Psoas muscle (tissue), 8 donors: ENCODE measurements at regions of chr1 and their contacts with region 1.

Region 1: GRCh38 chr1:43227143-43227764 is 42.5 kb upstream of the TMEM125 start:
- DNase-seq: peak; percentile 79 to 88
- ATAC-seq: peak; percentile 83 to 95 (median 88)
- H3K4me3 ChIP-seq: no peak overlapping the region
- H3K27ac ChIP-seq: no peak overlapping the region
- H3K4me1 ChIP-seq: no peaks in the 10 kb centered on the region
- H3K27me3 ChIP-seq: no peaks in the 10 kb centered on the region
- CTCF ChIP-seq: peak; percentile 96

Region 2: DNA sequence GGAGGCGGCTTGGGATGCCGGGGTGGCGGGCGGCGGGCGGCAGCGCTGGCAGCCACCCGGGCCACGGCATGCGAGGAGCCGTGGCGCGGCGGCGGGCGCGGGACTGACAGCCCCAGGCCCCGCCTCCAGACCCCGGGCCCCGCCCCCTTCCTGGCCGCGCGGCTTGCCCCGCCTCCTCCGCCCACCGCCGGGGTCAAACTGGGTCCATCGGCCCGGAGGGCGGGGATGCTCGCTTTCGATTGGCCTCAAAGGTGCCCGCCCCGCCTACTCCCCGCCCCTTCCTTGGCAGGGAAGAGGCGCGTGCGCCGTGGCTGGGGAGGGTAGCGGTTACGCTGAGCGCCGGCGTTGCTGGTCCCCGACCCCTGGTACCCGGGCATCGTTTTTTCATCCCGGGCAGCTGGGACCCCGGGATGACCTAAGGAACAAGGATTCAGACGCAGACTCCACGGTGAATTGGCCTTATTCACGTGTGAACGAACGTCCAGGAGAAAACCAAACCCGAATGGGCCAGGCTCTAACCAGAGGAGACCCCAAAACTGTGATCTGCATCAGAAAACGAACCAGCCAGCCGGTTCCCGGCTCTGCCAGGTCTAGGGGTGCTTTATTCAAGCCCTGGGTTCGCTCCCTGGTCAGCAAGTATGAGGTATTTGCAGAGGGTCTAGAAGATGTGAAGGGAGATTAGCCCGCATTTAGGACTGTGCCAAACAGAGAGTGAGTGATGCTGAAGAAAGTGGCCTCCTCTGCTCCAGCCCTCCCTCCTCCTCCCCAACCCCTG is 1191.2 kb before region 1 on chr1:
- intact Hi-C with region 1: no loop called
- DNase-seq: peak; percentile 97 to 98
- ATAC-seq: peak; percentile 98 to 99 (median 98)
- H3K4me3 ChIP-seq: peak overlapping the region; percentile 96
- H3K27ac ChIP-seq: peak overlapping the region; percentile 76
- H3K4me1 ChIP-seq: peaks cover 8% of the 10 kb centered on the region
- H3K27me3 ChIP-seq: no peaks in the 10 kb centered on the region
- CTCF ChIP-seq: no peak

Region 3: GRCh38 chr1:43367904-43368645 is 140.8 kb after region 1 on chr1 and contains the start of gene ELOVL1:
- intact Hi-C with region 1: loop called in 1 of 2 experiments (anchors 5 kb)
- DNase-seq: peak; percentile 94 to 96
- ATAC-seq: peak; percentile 95 to 97 (median 95)
- H3K4me3 ChIP-seq: peak within 1 kb of the TSS; percentile 81
- H3K27ac ChIP-seq: peak within 1 kb of the TSS; percentile 94
- H3K4me1 ChIP-seq: peaks cover 14% of the 10 kb centered on the region
- H3K27me3 ChIP-seq: no peaks in the 10 kb centered on the region
- CTCF ChIP-seq: peak; percentile 19
- total RNA-seq, gene ELOVL1: 15.9 to 19.2 (median 17.6) TPM

Region 4: GRCh38 chr1:43383449-43383848 is 156.2 kb after region 1 on chr1:
- intact Hi-C with region 1: loop called (anchors 5 to 10 kb)
- DNase-seq: no peak
- ATAC-seq: peak; percentile 68 to 83 (median 78)
- H3K4me3 ChIP-seq: no peak overlapping the region
- H3K27ac ChIP-seq: no peak overlapping the region
- H3K4me1 ChIP-seq: peaks cover 11% of the 10 kb centered on the region
- H3K27me3 ChIP-seq: no peaks in the 10 kb centered on the region
- CTCF ChIP-seq: peak; percentile 29

Region 5: DNA sequence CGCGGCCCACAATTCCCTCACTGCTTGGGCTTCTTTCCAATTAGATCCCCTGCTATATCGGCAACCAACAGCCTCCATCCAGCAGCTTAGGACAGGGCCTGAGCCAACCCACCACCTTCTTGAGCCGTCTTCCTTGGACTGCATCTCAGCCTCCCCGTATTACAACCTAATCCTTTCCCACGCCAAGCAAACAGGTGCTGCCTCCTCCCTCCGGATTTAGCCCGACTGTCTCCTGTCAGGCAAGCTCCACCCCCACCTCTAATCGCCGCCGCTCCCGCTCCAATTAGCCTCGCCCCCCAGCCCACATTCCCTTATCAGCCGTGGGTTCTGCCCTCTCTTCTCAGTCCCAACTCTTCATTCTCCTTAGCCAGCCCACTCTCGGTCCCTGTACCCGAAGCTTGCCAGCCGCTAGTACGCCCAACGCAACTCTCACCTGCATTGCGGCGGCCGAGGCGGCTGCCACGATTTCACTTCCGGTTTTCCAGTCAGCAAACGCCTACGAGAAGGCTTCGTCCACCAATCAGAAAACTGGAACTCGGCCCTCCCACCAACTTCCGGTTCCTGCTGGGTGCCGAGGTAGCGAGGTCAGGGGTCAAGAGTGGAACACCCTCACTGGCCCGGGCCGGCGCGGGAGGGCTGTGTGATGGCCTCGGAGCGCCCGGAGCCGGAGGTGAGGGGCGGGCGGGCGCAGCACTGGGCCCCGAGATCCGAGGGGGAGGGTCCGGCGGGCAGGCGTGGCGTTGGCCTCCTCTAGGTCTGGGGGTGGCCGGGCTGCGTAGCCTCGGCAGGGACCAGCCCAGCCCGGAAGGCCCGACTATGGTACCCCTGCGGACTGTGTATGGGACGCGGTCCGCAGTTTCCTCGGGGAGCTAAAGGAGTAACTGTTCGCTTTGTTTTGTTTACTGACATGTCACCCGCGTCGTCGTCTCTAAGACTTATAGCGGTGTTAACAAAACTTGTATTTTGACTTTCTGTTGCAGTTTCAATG is 162.4 kb after region 1 on chr1 and contains the starts of genes MED8 and SZT2:
- intact Hi-C with region 1: loop called (anchors 5 to 10 kb)
- DNase-seq: peak; percentile 95 to 97
- ATAC-seq: peak; percentile 99 to 100 (median 100)
- H3K4me3 ChIP-seq: peak within 1 kb of the TSS; percentile 91
- H3K27ac ChIP-seq: peak within 1 kb of the TSS; percentile 90
- H3K4me1 ChIP-seq: peaks cover 29% of the 10 kb centered on the region
- H3K27me3 ChIP-seq: no peaks in the 10 kb centered on the region
- CTCF ChIP-seq: no peak
- total RNA-seq, gene MED8: 15.4 to 18.2 (median 17.2) TPM
- total RNA-seq, gene SZT2: 14.2 to 24.7 (median 19.9) TPM

Region 6: DNA sequence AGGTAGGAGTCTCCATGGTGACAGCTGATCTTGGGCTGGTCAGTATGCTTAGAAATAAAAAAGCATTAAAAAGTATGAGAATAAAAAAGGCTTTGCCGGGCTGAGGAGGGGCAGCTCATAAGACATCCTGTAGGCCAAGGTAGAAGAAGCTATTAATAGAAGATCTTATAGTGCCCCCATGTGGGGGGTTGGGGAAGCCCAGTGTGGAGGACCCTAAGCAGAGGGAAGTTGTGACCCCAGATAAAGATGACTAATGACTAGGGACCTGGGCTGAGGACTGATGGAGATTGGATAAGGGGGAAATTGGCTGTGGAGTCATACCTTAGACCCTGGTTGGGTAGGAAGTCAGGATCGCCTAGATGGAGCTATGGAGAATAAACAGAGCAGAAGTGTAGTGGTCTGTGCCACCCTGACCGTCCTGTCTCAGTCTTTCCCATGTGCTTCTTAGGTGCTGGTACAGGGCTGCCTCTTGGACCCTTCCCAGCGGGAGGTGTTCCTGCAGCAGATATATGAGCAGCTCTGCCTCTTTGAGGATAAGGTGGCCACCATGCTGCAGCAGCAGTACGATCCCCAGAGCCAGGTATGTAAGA is 187.5 kb after region 1 on chr1:
- intact Hi-C with region 1: loop called (anchors 2 to 5 kb)
- DNase-seq: peak in 1 of 2 donors; percentile 48
- ATAC-seq: peak; percentile 68 to 89 (median 82)
- H3K4me3 ChIP-seq: no peak overlapping the region
- H3K27ac ChIP-seq: no peak overlapping the region
- H3K4me1 ChIP-seq: no peaks in the 10 kb centered on the region
- H3K27me3 ChIP-seq: no peaks in the 10 kb centered on the region
- CTCF ChIP-seq: peak; percentile 59